ENCODE measurements at regions of chr21 and their contacts with region 1.

Region 1: GRCh38 chr21:36260030-36260787 is 59.8 kb upstream of the MORC3 start:
- DNase-seq: peak in 2 of 10 donors; percentile 12 to 19

Region 2: GRCh38 chr21:36319765-36320420 is 59.7 kb after region 1 on chr21 and contains the start of gene MORC3:
- intact Hi-C with region 1: loop called (anchors 10 kb)
- DNase-seq: peak; percentile 95 to 100 (median 98)

Region 3: GRCh38 chr21:38170280-38170679 is 1910.1 kb after region 1 on chr21:
- intact Hi-C with region 1: no loop called
- DNase-seq: peak in 1 of 10 donors; percentile 15